ENCODE measurements at regions of chr15 and their contacts with region 1.

Region 1: GRCh38 chr15:38421069-38421690 is 32.7 kb upstream of the FAM98B start:
- DNase-seq: no peak
- H3K4me3 Mint-ChIP-seq: no peak overlapping the region
- H3K27ac Mint-ChIP-seq: no peak overlapping the region
- H3K4me1 Mint-ChIP-seq: peaks cover 10% of the 10 kb centered on the region
- H3K27me3 Mint-ChIP-seq: peaks cover 47% of the 10 kb centered on the region

Region 2: DNA sequence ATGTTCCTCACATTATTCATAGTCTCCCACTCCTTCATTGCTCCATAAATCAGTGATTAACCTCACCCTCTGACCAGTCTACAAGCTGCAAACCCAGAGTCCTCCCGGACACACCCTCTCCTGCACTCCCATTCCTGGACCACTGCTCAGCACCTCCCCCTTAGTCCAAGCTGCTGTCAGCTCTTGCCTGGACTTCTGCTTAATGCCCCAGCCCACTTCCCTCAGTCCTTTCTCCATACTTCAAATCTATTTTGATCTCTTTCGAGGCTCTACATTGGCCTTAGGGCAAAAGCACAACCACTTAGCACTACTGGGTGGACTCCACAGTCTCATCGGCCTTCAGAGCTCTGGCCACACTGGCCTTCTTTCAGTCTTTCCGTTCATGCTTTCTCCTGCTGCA is 46.6 kb before region 1 on chr15:
- CTCF ChIA-PET with region 1: no interaction called
- POLR2A ChIA-PET with region 1: interaction called, 10 read pairs
- DNase-seq: no peak
- H3K4me3 Mint-ChIP-seq: no peak overlapping the region
- H3K27ac Mint-ChIP-seq: no peak overlapping the region
- H3K4me1 Mint-ChIP-seq: no peaks in the 10 kb centered on the region
- H3K27me3 Mint-ChIP-seq: peaks cover 42% of the 10 kb centered on the region

Region 3: DNA sequence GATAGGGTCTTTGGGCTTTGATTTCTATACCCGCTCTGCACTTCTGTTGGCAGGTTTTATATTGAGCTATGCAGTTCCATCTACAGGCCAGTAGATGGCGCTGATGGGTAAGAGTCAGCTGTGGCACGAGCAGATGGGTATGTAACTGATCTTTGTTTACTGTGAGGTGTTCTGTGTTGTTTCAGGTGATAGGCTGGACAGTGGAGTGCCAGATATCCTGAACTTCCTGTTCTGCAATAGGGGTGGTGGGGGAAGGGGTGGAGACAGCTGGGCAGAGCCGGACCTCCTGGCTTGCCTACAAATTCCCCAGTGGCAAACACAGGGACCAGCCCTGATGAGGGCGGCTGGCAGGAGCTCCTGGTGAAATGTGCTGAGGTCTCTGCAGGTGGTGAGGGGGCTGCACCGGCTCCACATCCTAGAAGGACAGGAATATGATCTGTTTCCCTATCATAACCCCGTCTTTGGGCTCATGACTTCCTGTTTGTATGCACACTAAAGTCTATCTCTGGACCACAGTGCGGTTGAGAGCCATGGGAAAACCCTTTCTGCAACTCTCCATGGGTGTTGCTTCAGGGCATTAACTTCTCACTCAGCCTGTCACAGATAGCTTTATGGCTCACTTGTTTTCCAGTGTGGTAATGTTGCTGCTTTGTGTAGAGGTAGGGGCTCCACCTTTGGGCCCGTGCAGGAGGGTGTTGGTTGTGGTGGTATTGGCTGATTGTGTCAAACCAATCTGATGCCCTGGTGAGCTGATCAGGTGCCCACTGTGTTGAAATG is 19.4 kb after region 1 on chr15:
- CTCF ChIA-PET with region 1: interaction called, 12 read pairs
- POLR2A ChIA-PET with region 1: no interaction called
- DNase-seq: peak; percentile 66
- H3K4me3 Mint-ChIP-seq: no peak overlapping the region
- H3K27ac Mint-ChIP-seq: peak overlapping the region; percentile 60
- H3K4me1 Mint-ChIP-seq: peaks cover 7% of the 10 kb centered on the region
- H3K27me3 Mint-ChIP-seq: peaks cover 41% of the 10 kb centered on the region

Measured in activated CD4-positive, alpha-beta T cell treated with anti-CD3 and anti-CD28 coated beads, Interleukin-2, amount 10 ng/mL, durations not matched to agents 7 days and 5 days (primary cell).